ENCODE measurements at regions of chr13 and their contacts with region 1.

Region 1: DNA sequence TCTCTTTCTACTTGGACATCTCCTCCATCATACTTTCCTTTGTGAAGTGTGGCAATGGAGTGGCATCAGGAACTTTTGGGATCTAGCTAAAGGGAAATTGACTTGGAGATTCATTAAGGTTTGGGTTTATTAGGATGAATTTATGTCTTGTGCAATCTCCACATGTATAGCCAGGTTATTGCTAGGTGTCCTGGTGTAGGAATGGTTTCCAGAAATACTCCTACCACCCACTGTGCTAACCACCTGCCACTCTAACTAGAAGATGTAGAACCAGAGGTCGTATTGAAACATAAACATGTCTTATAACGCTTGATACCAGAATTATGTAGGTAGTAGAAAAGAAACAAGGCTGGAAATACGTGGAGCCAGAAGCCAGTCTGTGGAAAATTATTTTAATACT is 38.1 kb upstream of the MED4 start:
- DNase-seq: no peak
- H3K4me3 Mint-ChIP-seq: no peak overlapping the region
- H3K27ac Mint-ChIP-seq: no peak overlapping the region
- H3K4me1 Mint-ChIP-seq: no peaks in the 10 kb centered on the region
- H3K27me3 Mint-ChIP-seq: peaks cover 15% of the 10 kb centered on the region

Region 2: DNA sequence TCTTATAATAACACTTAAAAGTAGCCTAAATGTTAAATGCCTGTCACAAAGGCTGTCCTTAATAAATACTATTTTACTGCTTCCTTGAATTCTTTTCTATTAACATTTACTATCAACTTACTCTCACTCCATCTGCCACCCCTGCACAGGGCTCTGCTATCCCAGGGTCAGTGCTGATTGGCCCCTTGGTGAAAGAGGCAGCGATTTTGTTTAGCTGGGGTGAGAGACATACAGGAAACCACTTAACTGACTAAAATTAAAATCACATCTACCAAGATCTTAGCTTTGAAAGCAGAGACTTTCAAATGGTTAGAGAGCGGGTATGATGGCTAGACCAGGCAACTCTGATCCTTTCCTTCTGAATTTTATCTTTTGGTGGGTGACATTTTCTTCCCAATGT is 1086.3 kb before region 1 on chr13:
- intact Hi-C with region 1: no loop called
- DNase-seq: no peak
- H3K4me3 Mint-ChIP-seq: no peak overlapping the region
- H3K27ac Mint-ChIP-seq: no peak overlapping the region
- H3K4me1 Mint-ChIP-seq: no peaks in the 10 kb centered on the region
- H3K27me3 Mint-ChIP-seq: peaks cover 10% of the 10 kb centered on the region

Region 3: DNA sequence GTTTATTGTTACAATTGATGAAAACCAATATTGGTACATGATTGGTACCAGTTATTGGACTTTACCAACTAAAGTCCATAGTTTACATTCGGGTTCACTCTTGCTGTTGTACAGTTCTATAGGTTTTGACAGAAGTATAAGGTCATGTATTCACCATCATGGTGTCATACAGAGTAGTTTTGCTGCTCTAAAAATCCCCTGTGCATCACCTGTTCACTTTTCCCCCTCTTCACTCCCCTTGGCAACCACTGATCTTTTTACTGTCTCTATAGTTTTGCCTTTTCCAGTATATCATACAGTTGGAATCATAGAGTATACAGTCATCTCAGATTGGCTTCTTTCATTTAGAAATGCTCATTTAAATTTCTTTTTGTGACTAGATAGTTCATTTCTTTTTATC is 13.2 kb after region 1 on chr13:
- intact Hi-C with region 1: loop called (anchors 2 kb)
- DNase-seq: no peak
- H3K4me3 Mint-ChIP-seq: no peak overlapping the region
- H3K27ac Mint-ChIP-seq: no peak overlapping the region
- H3K4me1 Mint-ChIP-seq: no peaks in the 10 kb centered on the region
- H3K27me3 Mint-ChIP-seq: peaks cover 1% of the 10 kb centered on the region

Region 4: GRCh38 chr13:48318821-48319511 is 186.0 kb after region 1 on chr13:
- intact Hi-C with region 1: no loop called
- DNase-seq: no peak
- H3K4me3 Mint-ChIP-seq: peak overlapping the region; percentile 74
- H3K27ac Mint-ChIP-seq: no peak overlapping the region
- H3K4me1 Mint-ChIP-seq: peaks cover 31% of the 10 kb centered on the region
- H3K27me3 Mint-ChIP-seq: peaks cover 12% of the 10 kb centered on the region

Measured in activated T-helper 1 cell treated with anti-CD3 and anti-CD28 coated beads, Interleukin-12 subunit alpha, Interleukin-12 subunit beta, Interleukin-2, Interleukin-4 antibody, amounts not matched to agents 30 ng/mL and 10 ng/mL and 1 ng/mL, durations not matched to agents 14 hours and 24 hours and 36 hours (primary cell).